ENCODE measurements at regions of chr10 and their contacts with region 1.

Region 1: DNA sequence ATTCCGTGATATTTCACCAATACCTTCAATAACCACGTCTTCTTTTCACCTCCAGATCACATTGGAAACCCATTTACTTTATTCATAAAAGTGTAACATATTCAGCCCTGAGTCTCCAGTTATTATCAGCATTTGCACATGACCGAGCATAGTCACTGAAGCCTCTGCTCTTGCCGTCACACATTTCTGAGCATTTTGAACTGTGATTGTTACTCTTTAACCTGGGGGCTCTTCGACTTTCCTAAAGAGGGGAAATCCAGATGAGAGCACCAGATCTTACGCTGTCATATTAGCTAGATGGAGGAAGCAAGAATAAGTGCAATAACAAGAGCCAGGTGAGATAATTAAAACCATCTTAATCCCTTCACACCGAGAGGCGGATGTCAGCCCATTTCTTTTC is 260.0 kb upstream of the NRP1 start:
- DNase-seq: no peak
- ATAC-seq: peak; percentile 89
- H3K4me3 ChIP-seq: no peak overlapping the region
- H3K27ac ChIP-seq: no peak overlapping the region
- H3K4me1 ChIP-seq: no peaks in the 10 kb centered on the region
- H3K27me3 ChIP-seq: no peaks in the 10 kb centered on the region
- CTCF ChIP-seq: no peak
- EP300 ChIP-seq: no peak
- POLR2A ChIP-seq: no peak
- RAD21 ChIP-seq: no peak

Region 2: GRCh38 chr10:33509231-33509831 is 85.1 kb before region 1 on chr10:
- CTCF ChIA-PET with region 1: no interaction called
- POLR2A ChIA-PET with region 1: no interaction called
- RAD21 ChIA-PET with region 1: interaction called, 10 read pairs
- SMC1A ChIA-PET with region 1: no interaction called
- in situ Hi-C with region 1: no loop called
- intact Hi-C with region 1: no loop called
- DNase-seq: peak; percentile 25
- ATAC-seq: peak; percentile 87
- H3K4me3 ChIP-seq: no peak overlapping the region
- H3K27ac ChIP-seq: no peak overlapping the region
- H3K4me1 ChIP-seq: no peaks in the 10 kb centered on the region
- H3K27me3 ChIP-seq: no peaks in the 10 kb centered on the region
- CTCF ChIP-seq: no peak
- EP300 ChIP-seq: peak; percentile 70 to 84; a peak in 3 of 4 replicates
- POLR2A ChIP-seq: no peak
- RAD21 ChIP-seq: no peak

Region 3: DNA sequence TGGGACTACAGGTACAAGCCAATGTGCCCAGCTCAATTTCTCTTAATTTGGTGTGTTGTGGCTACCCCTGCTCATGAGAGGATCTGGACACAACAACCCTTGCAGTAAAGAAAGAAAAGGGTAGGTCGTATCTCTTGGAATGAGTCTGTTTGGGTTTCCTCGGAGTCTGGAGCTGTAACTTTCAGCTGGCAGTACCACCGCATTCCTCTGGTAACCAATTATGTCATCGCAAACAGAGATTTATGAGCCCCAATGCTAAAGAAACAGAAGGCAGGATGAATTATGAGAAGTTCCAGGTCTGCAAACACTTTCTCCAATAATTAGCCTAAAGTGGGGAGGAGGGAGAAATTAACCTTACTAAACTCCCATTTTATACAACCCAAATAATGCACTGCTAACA is 73.4 kb before region 1 on chr10:
- CTCF ChIA-PET with region 1: no interaction called
- POLR2A ChIA-PET with region 1: no interaction called
- RAD21 ChIA-PET with region 1: no interaction called
- SMC1A ChIA-PET with region 1: no interaction called
- in situ Hi-C with region 1: no loop called
- intact Hi-C with region 1: no loop called
- DNase-seq: no peak
- ATAC-seq: no peak
- H3K4me3 ChIP-seq: no peak overlapping the region
- H3K27ac ChIP-seq: no peak overlapping the region
- H3K4me1 ChIP-seq: no peaks in the 10 kb centered on the region
- H3K27me3 ChIP-seq: no peaks in the 10 kb centered on the region
- CTCF ChIP-seq: no peak
- EP300 ChIP-seq: no peak
- POLR2A ChIP-seq: no peak
- RAD21 ChIP-seq: no peak

Region 4: GRCh38 chr10:33559105-33559504 is 35.4 kb before region 1 on chr10:
- CTCF ChIA-PET with region 1: interaction called, 3 read pairs
- POLR2A ChIA-PET with region 1: no interaction called
- RAD21 ChIA-PET with region 1: interaction called, 14 read pairs
- SMC1A ChIA-PET with region 1: interaction called, 16 read pairs
- in situ Hi-C with region 1: no loop called
- intact Hi-C with region 1: no loop called
- DNase-seq: no peak
- ATAC-seq: peak; percentile 79
- H3K4me3 ChIP-seq: no peak overlapping the region
- H3K27ac ChIP-seq: no peak overlapping the region
- H3K4me1 ChIP-seq: no peaks in the 10 kb centered on the region
- H3K27me3 ChIP-seq: no peaks in the 10 kb centered on the region
- CTCF ChIP-seq: no peak
- EP300 ChIP-seq: no peak; a peak in 1 of 4 replicates
- POLR2A ChIP-seq: no peak
- RAD21 ChIP-seq: no peak

Region 5: DNA sequence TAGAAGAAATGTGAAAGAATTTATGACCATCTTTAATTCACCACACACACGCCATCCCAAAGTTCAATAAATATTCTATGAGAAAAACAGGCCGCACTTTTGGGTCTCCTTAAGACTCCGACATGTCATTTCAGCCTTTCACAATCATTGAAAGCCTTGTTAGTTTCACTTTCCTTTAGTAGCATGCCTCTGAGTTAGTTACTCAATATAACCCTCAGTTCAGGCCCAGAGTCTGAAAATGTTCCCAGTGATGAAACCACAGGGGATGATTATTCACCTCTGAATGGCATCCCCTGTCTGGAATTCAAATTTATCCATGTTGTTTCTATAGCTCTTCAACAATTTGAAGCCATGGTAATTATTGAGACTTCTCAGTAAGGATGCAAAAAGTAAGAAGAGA is 18.1 kb after region 1 on chr10:
- CTCF ChIA-PET with region 1: no interaction called
- POLR2A ChIA-PET with region 1: no interaction called
- RAD21 ChIA-PET with region 1: interaction called, 3 read pairs
- SMC1A ChIA-PET with region 1: interaction called, 20 read pairs
- in situ Hi-C with region 1: no loop called
- intact Hi-C with region 1: no loop called
- DNase-seq: no peak
- ATAC-seq: peak; percentile 96
- H3K4me3 ChIP-seq: no peak overlapping the region
- H3K27ac ChIP-seq: no peak overlapping the region
- H3K4me1 ChIP-seq: no peaks in the 10 kb centered on the region
- H3K27me3 ChIP-seq: no peaks in the 10 kb centered on the region
- CTCF ChIP-seq: no peak
- EP300 ChIP-seq: peak in 1 of 2 experiments; percentile 25; a peak in 1 of 4 replicates
- POLR2A ChIP-seq: no peak
- RAD21 ChIP-seq: no peak

Region 6: GRCh38 chr10:33803248-33803647 is 208.8 kb after region 1 on chr10:
- CTCF ChIA-PET with region 1: no interaction called
- POLR2A ChIA-PET with region 1: no interaction called
- RAD21 ChIA-PET with region 1: no interaction called
- SMC1A ChIA-PET with region 1: no interaction called
- in situ Hi-C with region 1: no loop called
- intact Hi-C with region 1: no loop called
- DNase-seq: no peak
- ATAC-seq: no peak
- H3K4me3 ChIP-seq: no peak overlapping the region
- H3K27ac ChIP-seq: no peak overlapping the region
- H3K4me1 ChIP-seq: no peaks in the 10 kb centered on the region
- H3K27me3 ChIP-seq: no peaks in the 10 kb centered on the region
- CTCF ChIP-seq: no peak
- EP300 ChIP-seq: no peak
- POLR2A ChIP-seq: no peak
- RAD21 ChIP-seq: no peak

Measured in GM12878 (cell line).